B cell (primary cell): ENCODE measurements at regions of chr7 and their contacts with region 1.

Region 1: GRCh38 chr7:36152756-36153570 is at the start of gene EEPD1:
- DNase-seq: peak; percentile 100
- ATAC-seq: peak; percentile 91
- H3K4me3 ChIP-seq: peak within 1 kb of the TSS; percentile 51 to 79 (median 72)
- H3K4me3 Mint-ChIP-seq: peak within 1 kb of the TSS; percentile 88
- H3K27ac ChIP-seq: peak within 1 kb of the TSS in 1 of 2 donors; percentile 40
- H3K27ac Mint-ChIP-seq: peak within 1 kb of the TSS; percentile 67
- H3K4me1 ChIP-seq: peaks cover 12% of the 10 kb centered on the region in 2 donors
- H3K4me1 Mint-ChIP-seq: peaks cover 16% of the 10 kb centered on the region
- H3K27me3 ChIP-seq: peaks cover 0 to 19% (median 2%) of the 10 kb centered on the region in 4 experiments
- H3K27me3 Mint-ChIP-seq: peaks cover 5% of the 10 kb centered on the region
- CTCF ChIP-seq: no peak
- total RNA-seq, gene EEPD1: 3.8 and 4.1 TPM in 2 replicates

Region 2: DNA sequence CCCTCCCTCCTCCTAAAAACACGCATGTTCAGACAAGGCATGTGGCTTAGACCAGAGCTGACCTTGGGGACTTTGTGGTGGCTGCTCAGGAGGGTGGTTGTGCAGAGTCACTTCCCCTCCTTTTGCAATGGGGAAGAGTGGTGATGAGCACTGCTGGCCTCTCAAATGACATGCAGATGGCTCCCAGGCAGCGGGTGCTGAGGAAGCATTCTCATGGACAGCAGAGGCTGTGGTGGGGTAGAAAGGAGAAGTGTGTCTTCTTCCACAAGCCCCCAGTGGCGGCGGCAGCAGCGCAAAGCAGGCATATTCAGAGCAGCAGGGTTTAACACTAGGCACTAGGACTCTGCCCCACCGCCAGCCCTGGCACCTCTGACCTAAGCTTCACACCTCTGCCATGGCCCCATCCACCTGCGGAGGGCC is 130.8 kb after region 1 on chr7:
- CTCF ChIA-PET with region 1: no interaction called
- POLR2A ChIA-PET with region 1: no interaction called
- intact Hi-C with region 1: loop called (anchors 1 kb)
- DNase-seq: peak; percentile 82
- ATAC-seq: peak; percentile 82
- H3K4me3 ChIP-seq: no peak overlapping the region
- H3K4me3 Mint-ChIP-seq: peak overlapping the region; percentile 49
- H3K27ac ChIP-seq: no peak overlapping the region
- H3K27ac Mint-ChIP-seq: peak overlapping the region; percentile 80
- H3K4me1 ChIP-seq: peaks cover 48 to 56% of the 10 kb centered on the region in 2 donors
- H3K4me1 Mint-ChIP-seq: peaks cover 53% of the 10 kb centered on the region
- H3K27me3 ChIP-seq: no peaks in the 10 kb centered on the region
- H3K27me3 Mint-ChIP-seq: peaks cover 21% of the 10 kb centered on the region
- CTCF ChIP-seq: no peak